ENCODE measurements at regions of chr21 and their contacts with region 1.

Region 1: GRCh38 chr21:35204850-35205541 is 155.9 kb upstream of the RUNX1 start:
- DNase-seq: peak; percentile 89
- H3K4me3 ChIP-seq: peak overlapping the region in 3 of 4 donors; percentile 23 to 25 (median 24)
- H3K27ac ChIP-seq: peak overlapping the region; percentile 31 to 82 (median 68)
- H3K4me1 ChIP-seq: peaks cover 0 to 52% (median 43%) of the 10 kb centered on the region in 4 donors
- H3K27me3 ChIP-seq: no peaks in the 10 kb centered on the region
- CTCF ChIP-seq: peak in 1 of 4 experiments; percentile 15
- EP300 ChIP-seq: peak in 1 of 4 donors; percentile 9
- POLR2A ChIP-seq: no peak

Region 2: DNA sequence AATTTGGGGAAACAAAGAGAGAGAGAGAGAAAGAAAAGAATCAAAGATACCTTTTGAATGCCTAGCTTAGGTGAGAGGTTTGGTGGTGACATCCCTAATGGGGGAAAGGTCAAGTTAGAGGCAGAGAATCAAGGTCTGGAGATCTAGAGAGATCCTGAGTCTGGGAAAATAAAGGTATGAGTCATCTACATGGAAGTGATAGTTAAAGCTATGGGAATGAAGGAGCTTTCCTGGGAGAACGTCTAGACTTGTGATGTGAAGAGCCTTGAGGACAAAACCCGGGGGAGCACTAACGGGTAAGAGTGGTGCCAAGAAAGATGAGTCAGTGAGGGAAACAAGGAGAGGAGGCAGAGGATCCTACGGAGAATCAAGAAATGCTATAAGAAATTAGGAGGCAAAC is 45.1 kb before region 1 on chr21:
- intact Hi-C with region 1: no loop called
- DNase-seq: no peak
- H3K4me3 ChIP-seq: no peak overlapping the region
- H3K27ac ChIP-seq: no peak overlapping the region
- H3K4me1 ChIP-seq: no peaks in the 10 kb centered on the region
- H3K27me3 ChIP-seq: no peaks in the 10 kb centered on the region
- CTCF ChIP-seq: no peak
- EP300 ChIP-seq: no peak
- POLR2A ChIP-seq: no peak

Region 3: GRCh38 chr21:35178827-35179226 is 26.2 kb before region 1 on chr21:
- intact Hi-C with region 1: no loop called
- DNase-seq: no peak
- H3K4me3 ChIP-seq: no peak overlapping the region
- H3K27ac ChIP-seq: no peak overlapping the region
- H3K4me1 ChIP-seq: no peaks in the 10 kb centered on the region
- H3K27me3 ChIP-seq: no peaks in the 10 kb centered on the region
- CTCF ChIP-seq: no peak
- EP300 ChIP-seq: no peak
- POLR2A ChIP-seq: no peak

Region 4: GRCh38 chr21:35256467-35256988 is 51.5 kb after region 1 on chr21:
- intact Hi-C with region 1: loop called (anchors 5 kb)
- DNase-seq: peak; percentile 84
- H3K4me3 ChIP-seq: peak overlapping the region in 2 of 4 donors; percentile 14 to 24
- H3K27ac ChIP-seq: peak overlapping the region; percentile 1 to 72 (median 34)
- H3K4me1 ChIP-seq: peaks cover 0 to 19% (median 15%) of the 10 kb centered on the region in 4 donors
- H3K27me3 ChIP-seq: no peaks in the 10 kb centered on the region
- CTCF ChIP-seq: no peak
- EP300 ChIP-seq: no peak
- POLR2A ChIP-seq: no peak

Measured in sigmoid colon (tissue), 7 donors.